Sigmoid colon (tissue), 7 donors: ENCODE measurements at regions of chr7 and their contacts with region 1.

Region 1: GRCh38 chr7:44490351-44491200 is at the start of gene NUDCD3:
- DNase-seq: peak; percentile 91
- H3K4me3 ChIP-seq: peak within 1 kb of the TSS; percentile 71 to 92 (median 85)
- H3K27ac ChIP-seq: peak within 1 kb of the TSS; percentile 86 to 96 (median 94)
- H3K4me1 ChIP-seq: peaks cover 0 to 43% (median 33%) of the 10 kb centered on the region in 4 donors
- H3K27me3 ChIP-seq: no peaks in the 10 kb centered on the region
- CTCF ChIP-seq: peak in 1 of 4 experiments; percentile 23
- EP300 ChIP-seq: peak in 1 of 4 donors; percentile 27
- POLR2A ChIP-seq: no peak
- total RNA-seq, gene NUDCD3: 23.5 to 50.5 (median 47.1) TPM

Region 2: DNA sequence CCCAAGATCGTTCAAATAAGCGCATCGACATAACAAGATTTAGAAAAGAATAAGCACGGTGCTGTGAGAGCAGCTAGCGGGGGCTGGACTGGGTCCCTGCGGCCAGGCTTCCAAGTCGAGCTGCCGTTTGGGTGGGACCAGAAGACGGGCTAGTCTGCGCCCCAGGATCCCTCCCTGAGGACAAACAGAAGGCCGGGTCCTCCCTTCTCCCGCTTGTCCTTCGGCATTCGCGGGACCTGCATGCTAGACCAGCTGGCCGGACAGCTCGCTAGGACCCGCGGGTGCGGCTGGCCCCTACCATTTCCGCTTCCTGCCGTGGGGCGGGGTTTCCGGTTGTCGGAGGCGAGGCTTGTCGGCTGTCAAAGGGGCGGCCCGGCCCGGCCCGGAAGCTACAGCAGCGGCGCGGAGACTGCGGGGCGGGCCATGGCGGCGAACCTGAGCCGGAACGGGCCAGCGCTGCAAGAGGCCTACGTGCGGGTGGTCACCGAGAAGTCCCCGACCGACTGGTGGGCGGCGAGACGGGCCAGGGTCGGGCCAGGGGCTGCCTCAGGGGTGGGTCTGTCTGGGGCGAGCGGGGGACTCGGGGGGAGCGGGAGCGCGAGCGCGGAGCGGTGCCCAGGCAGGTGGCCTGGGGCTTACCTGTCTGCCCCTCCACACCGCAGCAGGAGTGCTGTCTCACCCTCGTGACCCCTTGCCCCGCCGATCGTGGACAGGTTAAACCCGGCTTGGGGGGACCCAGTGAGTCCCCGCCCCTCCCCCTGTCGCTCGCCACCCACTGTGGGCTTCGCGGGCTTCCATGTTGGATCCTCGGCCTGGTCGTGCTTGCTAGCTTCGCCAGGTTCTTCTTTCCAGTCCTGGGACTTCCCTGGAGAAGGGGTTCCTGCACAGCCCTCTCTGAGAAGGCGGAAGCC is 446.0 kb before region 1 on chr7 and contains the start of gene DBNL:
- intact Hi-C with region 1: loop called (anchors 5 kb)
- DNase-seq: peak; percentile 96
- H3K4me3 ChIP-seq: peak within 1 kb of the TSS; percentile 79 to 99 (median 94)
- H3K27ac ChIP-seq: peak within 1 kb of the TSS; percentile 86 to 91 (median 88)
- H3K4me1 ChIP-seq: peaks cover 0 to 48% (median 35%) of the 10 kb centered on the region in 4 donors
- H3K27me3 ChIP-seq: no peaks in the 10 kb centered on the region
- CTCF ChIP-seq: no peak
- EP300 ChIP-seq: no peak
- POLR2A ChIP-seq: peak; percentile 63 to 89
- total RNA-seq, gene DBNL: 76.7 to 124 (median 86.6) TPM

Region 3: GRCh38 chr7:44305564-44306507 is 184.7 kb before region 1 on chr7:
- intact Hi-C with region 1: no loop called
- DNase-seq: no peak
- H3K4me3 ChIP-seq: no peak overlapping the region
- H3K27ac ChIP-seq: no peak overlapping the region
- H3K4me1 ChIP-seq: peaks cover 0 to 10% (median 9%) of the 10 kb centered on the region in 4 donors
- H3K27me3 ChIP-seq: peaks cover 0 to 24% (median 19%) of the 10 kb centered on the region in 3 donors
- CTCF ChIP-seq: no peak
- EP300 ChIP-seq: no peak
- POLR2A ChIP-seq: no peak

Region 4: GRCh38 chr7:44398511-44398911 is 92.1 kb before region 1 on chr7:
- intact Hi-C with region 1: no loop called
- DNase-seq: no peak
- H3K4me3 ChIP-seq: no peak overlapping the region
- H3K27ac ChIP-seq: no peak overlapping the region
- H3K4me1 ChIP-seq: peaks cover 0 to 22% (median 19%) of the 10 kb centered on the region in 4 donors
- H3K27me3 ChIP-seq: no peaks in the 10 kb centered on the region
- CTCF ChIP-seq: no peak
- EP300 ChIP-seq: no peak
- POLR2A ChIP-seq: no peak

Region 5: DNA sequence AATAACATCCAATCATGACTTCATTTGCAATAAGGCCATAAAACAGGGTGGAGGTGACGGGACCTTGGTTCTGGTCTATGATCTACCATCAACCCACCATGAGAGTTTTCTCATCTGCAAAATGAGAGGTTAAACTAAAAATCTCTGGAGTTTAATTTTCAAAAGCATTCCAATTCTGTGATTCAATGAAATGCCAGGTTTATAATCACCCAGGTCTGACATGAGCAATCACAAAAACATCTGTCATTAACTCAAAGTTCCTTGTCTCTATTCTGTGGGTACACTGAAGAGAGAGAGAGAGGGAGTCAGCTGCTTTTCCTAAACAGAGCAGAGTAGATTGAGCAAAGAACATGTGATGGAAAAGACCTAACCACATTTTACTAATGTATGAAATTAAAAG is 75.5 kb before region 1 on chr7:
- intact Hi-C with region 1: no loop called
- DNase-seq: no peak
- H3K4me3 ChIP-seq: no peak overlapping the region
- H3K27ac ChIP-seq: no peak overlapping the region
- H3K4me1 ChIP-seq: no peaks in the 10 kb centered on the region
- H3K27me3 ChIP-seq: no peaks in the 10 kb centered on the region
- CTCF ChIP-seq: no peak
- EP300 ChIP-seq: no peak
- POLR2A ChIP-seq: no peak

Region 6: GRCh38 chr7:44565097-44565794 is 74.7 kb after region 1 on chr7:
- intact Hi-C with region 1: loop called (anchors 5 kb)
- DNase-seq: peak; percentile 79
- H3K4me3 ChIP-seq: no peak overlapping the region
- H3K27ac ChIP-seq: peak overlapping the region in 1 of 4 donors; percentile 35
- H3K4me1 ChIP-seq: no peaks in the 10 kb centered on the region
- H3K27me3 ChIP-seq: no peaks in the 10 kb centered on the region
- CTCF ChIP-seq: peak; percentile 72 to 97 (median 94)
- EP300 ChIP-seq: no peak
- POLR2A ChIP-seq: no peak

Region 7: DNA sequence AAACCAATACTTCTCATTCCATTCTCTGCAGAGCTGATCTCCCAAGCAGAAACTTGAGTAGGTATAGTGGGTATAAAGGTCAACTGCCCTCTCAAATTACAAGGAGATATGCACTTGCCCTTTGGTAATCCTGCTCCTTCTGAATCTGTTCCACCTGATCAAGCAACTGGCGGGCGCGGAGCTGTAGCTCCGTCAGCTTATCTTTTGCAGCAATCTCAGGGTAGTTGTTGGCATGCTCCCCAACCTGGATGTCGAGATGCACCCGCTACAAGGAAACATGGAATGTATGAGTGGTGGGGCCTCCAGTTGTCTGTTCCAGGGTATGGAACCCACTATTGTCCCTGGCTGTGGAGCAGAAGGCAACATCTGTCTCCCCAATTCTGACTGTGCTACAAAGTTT is 90.4 kb after region 1 on chr7:
- intact Hi-C with region 1: no loop called
- DNase-seq: no peak
- H3K4me3 ChIP-seq: peak overlapping the region; percentile 80 to 98 (median 88)
- H3K27ac ChIP-seq: peak overlapping the region; percentile 94 to 98 (median 97)
- H3K4me1 ChIP-seq: peaks cover 0 to 27% (median 21%) of the 10 kb centered on the region in 4 donors
- H3K27me3 ChIP-seq: no peaks in the 10 kb centered on the region
- CTCF ChIP-seq: no peak
- EP300 ChIP-seq: no peak
- POLR2A ChIP-seq: no peak